ENCODE measurements at regions of chr20 and their contacts with region 1.

Region 1: GRCh38 chr20:17654649-17655285 is 27.3 kb downstream of the RRBP1 start:
- DNase-seq: peak; percentile 2
- H3K4me3 Mint-ChIP-seq: no peak overlapping the region
- H3K27ac Mint-ChIP-seq: no peak overlapping the region
- H3K4me1 Mint-ChIP-seq: no peaks in the 10 kb centered on the region
- H3K27me3 Mint-ChIP-seq: no peaks in the 10 kb centered on the region
- CTCF ChIP-seq: no peak

Region 2: GRCh38 chr20:17594443-17594842 is 60.3 kb before region 1 on chr20:
- CTCF ChIA-PET with region 1: no interaction called
- intact Hi-C with region 1: no loop called
- DNase-seq: peak; percentile 37
- H3K4me3 Mint-ChIP-seq: no peak overlapping the region
- H3K27ac Mint-ChIP-seq: no peak overlapping the region
- H3K4me1 Mint-ChIP-seq: peaks cover 33% of the 10 kb centered on the region
- H3K27me3 Mint-ChIP-seq: no peaks in the 10 kb centered on the region
- CTCF ChIP-seq: no peak

Region 3: GRCh38 chr20:17624551-17625240 is 30.1 kb before region 1 on chr20:
- CTCF ChIA-PET with region 1: no interaction called
- intact Hi-C with region 1: no loop called
- DNase-seq: no peak
- H3K4me3 Mint-ChIP-seq: no peak overlapping the region
- H3K27ac Mint-ChIP-seq: no peak overlapping the region
- H3K4me1 Mint-ChIP-seq: no peaks in the 10 kb centered on the region
- H3K27me3 Mint-ChIP-seq: no peaks in the 10 kb centered on the region
- CTCF ChIP-seq: no peak

Region 4: DNA sequence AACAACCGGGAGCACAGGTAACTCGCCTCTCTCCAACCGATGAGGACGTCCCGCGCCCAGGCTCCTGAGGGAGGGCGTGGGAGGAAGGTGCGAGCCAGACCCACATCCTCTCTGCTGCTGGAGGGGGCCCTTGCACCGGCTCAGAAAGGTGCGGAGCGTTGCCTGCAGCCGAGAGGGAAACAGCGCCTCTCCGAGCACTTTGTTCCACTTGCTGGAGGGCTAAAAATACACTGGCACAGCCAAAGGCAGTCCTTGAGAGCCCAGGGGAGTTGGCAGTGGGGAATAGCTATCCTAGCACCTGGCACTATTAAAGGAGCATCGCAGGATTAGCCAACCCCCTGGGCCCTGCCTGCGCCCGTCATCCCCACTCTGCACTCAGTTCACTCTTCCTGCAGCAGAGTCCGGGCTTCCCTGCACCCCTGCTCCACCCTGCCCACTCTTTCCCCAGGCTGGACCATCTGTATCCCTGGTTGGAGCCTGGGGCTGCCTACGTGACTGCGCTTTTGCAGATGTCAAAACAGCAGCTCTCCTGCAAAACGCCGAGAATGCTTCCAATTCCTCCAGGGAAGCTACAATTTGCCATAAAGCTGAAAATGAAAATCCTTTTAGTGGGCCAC is 205.0 kb after region 1 on chr20:
- CTCF ChIA-PET with region 1: no interaction called
- intact Hi-C with region 1: no loop called
- DNase-seq: no peak
- H3K4me3 Mint-ChIP-seq: no peak overlapping the region
- H3K27ac Mint-ChIP-seq: no peak overlapping the region
- H3K4me1 Mint-ChIP-seq: peaks cover 8% of the 10 kb centered on the region
- H3K27me3 Mint-ChIP-seq: no peaks in the 10 kb centered on the region
- CTCF ChIP-seq: no peak

Region 5: DNA sequence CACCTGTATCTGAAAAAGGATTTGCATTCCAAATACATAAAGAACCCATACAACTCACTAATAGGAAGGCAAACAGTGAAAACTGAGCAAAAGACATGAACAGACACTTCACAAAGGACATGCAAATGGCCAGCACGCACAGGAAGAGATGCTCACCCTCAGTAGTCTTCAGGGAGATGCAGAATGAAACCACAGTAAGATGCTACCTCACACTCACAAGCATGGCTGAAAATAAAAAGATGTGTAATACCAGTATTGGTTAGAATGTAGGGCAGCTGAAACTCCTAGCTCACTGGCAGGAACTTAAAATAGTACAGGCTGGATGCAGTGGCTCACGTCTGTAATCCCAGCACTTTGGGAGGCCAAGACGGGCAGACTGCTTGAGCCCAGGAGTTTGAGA is 249.3 kb after region 1 on chr20:
- CTCF ChIA-PET with region 1: no interaction called
- intact Hi-C with region 1: loop called (anchors 10 kb)
- DNase-seq: no peak
- H3K4me3 Mint-ChIP-seq: no peak overlapping the region
- H3K27ac Mint-ChIP-seq: no peak overlapping the region
- H3K4me1 Mint-ChIP-seq: no peaks in the 10 kb centered on the region
- H3K27me3 Mint-ChIP-seq: no peaks in the 10 kb centered on the region
- CTCF ChIP-seq: no peak

Measured in Calu3 (cell line).